ENCODE measurements at regions of chr9 and their contacts with region 1.

Region 1: GRCh38 chr9:131762356-131762932 is 22.6 kb upstream of the RAPGEF1 start:
- ATAC-seq: peak; percentile 95 to 98 (median 96)
- H3K4me3 ChIP-seq: no peak overlapping the region
- H3K27ac ChIP-seq: no peak overlapping the region
- H3K4me1 ChIP-seq: peaks cover 2 to 4% of the 10 kb centered on the region in 2 donors

Region 2: GRCh38 chr9:131266266-131267229 is 495.9 kb before region 1 on chr9:
- in situ Hi-C with region 1: no loop called
- ATAC-seq: peak in 4 of 8 experiments; percentile 23 to 41 (median 27)
- H3K4me3 ChIP-seq: no peak overlapping the region
- H3K27ac ChIP-seq: peak overlapping the region; percentile 4 to 37
- H3K4me1 ChIP-seq: peaks cover 5 to 7% of the 10 kb centered on the region in 2 donors

Region 3: DNA sequence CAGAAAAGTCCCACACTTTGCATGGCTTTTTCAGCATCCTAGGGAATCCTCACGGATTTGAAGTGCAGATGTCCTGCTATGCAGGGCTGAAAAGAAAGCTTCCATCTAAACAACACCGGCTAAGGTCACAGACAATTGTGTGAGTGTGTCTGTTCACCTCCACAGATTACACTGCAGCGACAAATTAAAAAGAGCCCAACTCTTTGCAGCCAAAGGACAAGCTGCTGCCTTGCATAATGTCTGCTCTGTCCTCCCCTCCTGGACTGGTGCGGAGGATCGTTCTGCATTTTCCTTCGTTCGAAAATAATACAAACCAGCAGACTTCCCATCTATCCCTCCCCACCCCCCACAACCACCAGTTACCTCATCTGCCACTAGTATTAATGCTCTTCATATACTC is 148.1 kb after region 1 on chr9:
- in situ Hi-C with region 1: no loop called
- ATAC-seq: peak in 4 of 8 experiments; percentile 36 to 59 (median 54)
- H3K4me3 ChIP-seq: no peak overlapping the region
- H3K27ac ChIP-seq: no peak overlapping the region
- H3K4me1 ChIP-seq: peaks cover 13 to 18% of the 10 kb centered on the region in 2 donors

Region 4: GRCh38 chr9:132250324-132251262 is 488.1 kb after region 1 on chr9:
- in situ Hi-C with region 1: loop called in 8 of 9 experiments (anchors 10 to 25 kb)
- ATAC-seq: no peak
- H3K4me3 ChIP-seq: no peak overlapping the region
- H3K27ac ChIP-seq: no peak overlapping the region
- H3K4me1 ChIP-seq: peaks cover 4 to 12% of the 10 kb centered on the region in 2 donors